ENCODE measurements at regions of chr10 and their contacts with region 1.

Region 1: DNA sequence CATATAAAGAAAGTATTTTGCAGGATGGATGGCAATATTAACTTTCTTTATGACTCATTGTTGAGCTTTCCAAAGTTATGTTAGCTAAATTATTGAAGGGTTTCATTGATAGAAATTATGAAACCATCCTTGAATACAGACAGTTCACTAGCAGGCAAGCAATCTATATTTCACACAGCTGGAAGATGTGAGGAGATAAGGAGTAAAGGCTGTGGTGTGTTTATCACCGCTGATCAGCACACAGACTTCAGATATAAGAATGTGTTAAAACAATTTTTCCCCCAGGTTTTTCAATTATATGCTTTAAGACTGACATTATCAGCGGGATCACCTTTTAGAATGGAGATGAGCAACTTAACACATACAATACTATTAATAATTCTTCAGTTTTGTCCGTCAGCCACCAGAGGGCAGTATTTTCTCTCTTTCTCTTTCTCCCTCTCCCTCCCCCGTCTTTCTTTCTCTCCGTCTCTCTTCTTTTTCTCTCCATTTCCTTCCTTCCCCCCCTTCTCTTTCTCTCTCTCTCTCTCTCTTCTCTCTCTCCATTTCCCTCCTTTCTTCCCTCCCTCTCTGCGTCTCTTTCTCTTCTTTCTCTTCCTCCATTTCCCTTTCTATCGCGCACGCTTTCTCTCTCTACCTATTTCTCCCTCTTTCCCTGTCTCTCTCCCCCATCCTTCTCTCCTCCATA is 62.9 kb upstream of the FAM171A1 start:
- DNase-seq: no peak
- H3K4me3 ChIP-seq: peak overlapping the region; percentile 37
- H3K27me3 ChIP-seq: no peaks in the 10 kb centered on the region
- CTCF ChIP-seq: peak; percentile 59

Region 2: DNA sequence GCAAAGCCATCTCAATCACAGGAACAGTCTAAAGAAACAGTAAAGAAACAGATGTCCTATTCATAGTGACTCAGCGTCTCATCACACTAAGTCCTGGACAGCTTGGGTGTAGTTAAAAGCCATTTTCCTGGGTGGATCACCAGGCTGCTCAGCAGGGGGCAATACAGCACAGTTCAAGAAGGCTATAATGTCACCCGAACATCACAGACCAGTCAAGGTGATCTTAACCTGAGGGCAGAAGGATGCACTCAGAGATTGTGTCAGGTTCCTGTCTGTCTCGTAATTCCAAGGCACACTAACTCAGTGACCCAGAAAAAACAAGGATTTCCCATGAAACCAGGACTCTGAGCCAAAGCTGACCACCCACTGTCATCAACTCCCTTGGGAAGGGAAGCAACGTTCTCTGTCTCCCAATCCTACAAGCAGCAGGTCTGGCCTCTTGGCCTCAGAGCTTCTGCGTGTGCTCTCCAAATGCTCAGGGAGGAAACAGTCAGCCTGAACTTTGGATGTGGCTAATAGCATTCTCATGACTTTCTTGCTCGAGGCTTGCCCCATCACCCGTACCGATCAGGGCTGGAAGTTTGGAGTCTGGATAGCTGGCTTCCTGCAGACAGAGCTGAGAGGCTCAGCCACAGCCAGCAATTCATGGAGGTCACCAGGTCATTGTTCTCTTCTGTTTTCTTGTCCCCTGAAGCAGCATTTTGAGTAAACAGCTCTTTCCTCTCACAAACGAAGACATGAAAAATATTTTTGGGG is 27.5 kb after region 1 on chr10:
- CTCF ChIA-PET with region 1: interaction called, 12 read pairs
- POLR2A ChIA-PET with region 1: no interaction called
- DNase-seq: peak; percentile 84
- H3K4me3 ChIP-seq: no peak overlapping the region
- H3K27me3 ChIP-seq: no peaks in the 10 kb centered on the region
- CTCF ChIP-seq: peak; percentile 59

Region 3: DNA sequence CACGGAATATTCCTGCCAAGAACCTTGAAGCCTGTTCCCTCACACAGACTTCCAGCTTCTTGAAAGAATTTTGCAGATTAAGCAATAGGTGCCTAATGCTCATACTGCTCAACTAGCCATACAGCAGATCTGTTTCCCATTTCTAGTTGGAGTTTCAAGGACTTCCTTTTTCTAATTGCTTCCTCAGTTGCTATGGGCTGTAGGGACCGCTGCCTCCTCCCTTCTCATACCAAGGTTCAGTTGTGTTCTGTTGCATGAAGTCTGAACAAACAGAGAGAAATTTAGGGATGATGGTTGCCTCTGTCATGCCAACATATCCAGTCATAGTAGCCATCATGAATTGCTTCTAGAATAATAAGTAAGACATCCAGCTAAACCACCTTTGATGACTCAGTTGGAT is 278.9 kb after region 1 on chr10:
- CTCF ChIA-PET with region 1: interaction called, 57 read pairs
- POLR2A ChIA-PET with region 1: no interaction called
- DNase-seq: no peak
- H3K4me3 ChIP-seq: no peak overlapping the region
- H3K27me3 ChIP-seq: no peaks in the 10 kb centered on the region
- CTCF ChIP-seq: no peak

Region 4: DNA sequence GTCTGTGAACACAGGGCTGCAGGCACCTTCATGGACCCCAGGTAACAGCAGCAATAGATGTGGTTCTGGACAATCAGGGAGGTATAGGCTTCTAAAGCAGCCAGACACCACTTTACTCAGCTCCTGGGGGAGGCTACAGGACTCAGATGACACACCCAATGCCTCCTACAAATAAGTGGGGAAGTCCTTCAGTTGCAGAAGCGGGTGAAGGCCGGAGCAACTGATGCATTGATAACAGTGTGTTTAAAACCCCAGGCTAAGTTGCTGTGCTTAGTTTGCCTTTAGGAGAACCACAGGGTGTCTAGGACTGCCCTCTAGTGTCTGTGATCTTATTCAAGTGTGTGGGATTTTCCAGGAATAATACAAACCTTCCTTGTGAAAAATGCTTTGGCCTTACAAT is 291.6 kb after region 1 on chr10:
- CTCF ChIA-PET with region 1: interaction called, 124 read pairs
- POLR2A ChIA-PET with region 1: no interaction called
- DNase-seq: no peak
- H3K4me3 ChIP-seq: no peak overlapping the region
- H3K27me3 ChIP-seq: no peaks in the 10 kb centered on the region; the same call in 1 of the 2 replicates
- CTCF ChIP-seq: peak; percentile 72